ENCODE measurements at regions of chr1 and their contacts with region 1.

Region 1: DNA sequence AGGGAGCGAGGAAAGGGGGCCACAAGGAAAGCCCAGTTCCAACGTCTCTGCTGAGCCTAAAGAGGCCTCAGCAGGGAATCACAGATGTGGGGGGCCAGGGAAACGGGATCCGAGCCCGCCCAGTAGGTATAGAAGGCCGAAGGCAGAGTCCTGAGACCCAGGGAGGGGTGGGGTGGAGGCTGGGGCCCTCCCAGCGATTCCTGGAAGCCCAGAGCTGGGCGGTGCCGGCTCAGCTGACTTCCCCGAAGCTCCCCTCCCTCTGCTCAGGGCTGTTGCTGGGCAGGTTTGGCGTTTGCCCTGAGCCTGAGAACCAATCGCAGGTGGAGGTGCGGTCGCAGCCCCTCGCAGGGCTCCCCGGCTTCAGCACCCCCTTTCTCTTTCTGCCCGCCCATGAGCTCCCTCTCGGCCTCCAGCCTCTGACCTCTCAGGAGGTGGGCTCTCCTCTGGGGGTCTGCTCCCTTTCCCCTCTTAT is 12.8 kb downstream of the ADAMTSL4 start:
- DNase-seq: peak; percentile 73
- ATAC-seq: peak; percentile 66
- H3K4me3 ChIP-seq: peak overlapping the region; percentile 51 to 68
- H3K27ac ChIP-seq: peak overlapping the region; percentile 95
- H3K4me1 ChIP-seq: peaks cover 42 to 58% of the 10 kb centered on the region in 2 experiments
- H3K27me3 ChIP-seq: no peaks in the 10 kb centered on the region
- CTCF ChIP-seq: no peak
- POLR2A ChIP-seq: peak; percentile 2
- RAD21 ChIP-seq: no peak

Region 2: GRCh38 chr1:150464422-150464826 is 97.6 kb before region 1 on chr1:
- CTCF ChIA-PET with region 1: interaction called, 5 read pairs
- POLR2A ChIA-PET with region 1: no interaction called
- RAD21 ChIA-PET with region 1: no interaction called
- intact Hi-C with region 1: loop called (anchors 1 kb)
- DNase-seq: peak; percentile 41
- ATAC-seq: peak; percentile 81
- H3K4me3 ChIP-seq: no peak overlapping the region
- H3K27ac ChIP-seq: no peak overlapping the region
- H3K4me1 ChIP-seq: no peaks in the 10 kb centered on the region
- H3K27me3 ChIP-seq: no peaks in the 10 kb centered on the region
- CTCF ChIP-seq: peak; percentile 64 to 79 (median 67)
- POLR2A ChIP-seq: no peak
- RAD21 ChIP-seq: peak; percentile 83

Region 3: DNA sequence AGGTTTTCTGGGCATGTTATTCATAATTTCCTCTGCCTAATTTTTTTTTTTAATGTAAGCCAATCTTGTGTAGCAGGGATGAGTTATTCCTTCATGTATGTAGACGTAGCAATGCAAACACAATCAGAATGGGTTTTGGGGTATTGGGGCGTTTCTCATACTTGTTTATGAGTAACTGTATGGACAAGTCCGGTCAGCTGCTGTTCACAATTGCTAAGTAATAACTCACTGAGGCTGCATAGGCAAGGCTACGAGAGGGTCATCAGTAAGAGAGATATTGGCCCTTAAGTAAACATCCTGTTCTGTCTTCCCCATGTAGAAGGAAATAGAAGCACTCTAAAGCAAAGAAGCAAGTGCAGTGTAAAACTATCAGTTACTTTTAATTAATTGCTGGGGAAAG is 84.3 kb before region 1 on chr1:
- CTCF ChIA-PET with region 1: no interaction called
- POLR2A ChIA-PET with region 1: no interaction called
- RAD21 ChIA-PET with region 1: no interaction called
- intact Hi-C with region 1: no loop called
- DNase-seq: no peak
- ATAC-seq: no peak
- H3K4me3 ChIP-seq: no peak overlapping the region
- H3K27ac ChIP-seq: no peak overlapping the region
- H3K4me1 ChIP-seq: no peaks in the 10 kb centered on the region
- H3K27me3 ChIP-seq: 0 out of 2 replicates have a peak, but pooled peaks cover 2% of the 10 kb centered on the region
- CTCF ChIP-seq: no peak
- POLR2A ChIP-seq: no peak
- RAD21 ChIP-seq: no peak

Region 4: DNA sequence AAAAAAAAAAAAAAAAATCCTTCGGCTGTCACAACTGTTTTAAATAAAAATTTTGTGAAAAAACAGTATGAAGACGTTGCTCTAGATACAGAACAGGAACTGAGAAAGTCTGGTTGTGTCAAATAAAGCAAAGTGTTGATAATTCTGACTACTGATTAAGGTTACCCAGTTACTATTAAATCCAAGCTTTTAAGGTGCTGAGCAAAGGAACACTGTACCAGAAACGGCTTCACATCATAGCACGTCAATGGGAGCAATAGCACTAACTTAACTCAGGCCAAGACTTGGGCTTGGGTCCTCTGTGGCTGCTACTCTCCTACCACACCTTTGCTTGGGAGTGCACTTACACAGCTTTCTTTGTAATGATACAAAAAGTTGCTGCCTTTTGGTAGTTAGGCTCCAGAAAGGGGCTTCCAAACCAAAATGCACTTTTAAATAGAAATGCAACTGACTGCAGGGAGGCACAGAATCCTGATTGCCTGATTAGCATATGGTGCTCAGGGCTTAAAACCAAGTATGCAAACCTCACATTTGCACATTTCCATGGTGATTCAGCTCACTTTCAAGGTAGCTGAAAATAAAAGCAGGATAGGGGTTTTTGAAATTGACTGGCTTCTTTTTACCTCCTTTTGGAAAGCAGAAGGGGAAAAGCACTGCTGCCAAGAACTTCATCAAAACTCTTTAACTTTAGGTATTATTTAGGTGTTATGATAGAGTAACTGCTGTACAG is 11.1 kb after region 1 on chr1:
- CTCF ChIA-PET with region 1: interaction called, 9 read pairs
- POLR2A ChIA-PET with region 1: interaction called, 41 read pairs
- RAD21 ChIA-PET with region 1: no interaction called
- intact Hi-C with region 1: no loop called
- DNase-seq: no peak
- ATAC-seq: no peak
- H3K4me3 ChIP-seq: no peak overlapping the region
- H3K27ac ChIP-seq: no peak overlapping the region; the same call in 1 of the 2 replicates
- H3K4me1 ChIP-seq: peaks cover 56 to 84% of the 10 kb centered on the region in 2 experiments
- H3K27me3 ChIP-seq: no peaks in the 10 kb centered on the region
- CTCF ChIP-seq: no peak
- POLR2A ChIP-seq: no peak
- RAD21 ChIP-seq: no peak

Region 5: GRCh38 chr1:150629115-150629928 is 67.3 kb after region 1 on chr1 and contains the start of gene ENSA:
- CTCF ChIA-PET with region 1: interaction called, 13 read pairs
- POLR2A ChIA-PET with region 1: interaction called, 5 read pairs
- RAD21 ChIA-PET with region 1: no interaction called
- intact Hi-C with region 1: no loop called
- DNase-seq: peak; percentile 99
- ATAC-seq: peak; percentile 92
- H3K4me3 ChIP-seq: peak within 1 kb of the TSS; percentile 65 to 79
- H3K27ac ChIP-seq: peak within 1 kb of the TSS; percentile 73
- H3K4me1 ChIP-seq: peaks cover 9 to 29% of the 10 kb centered on the region in 2 experiments
- H3K27me3 ChIP-seq: no peaks in the 10 kb centered on the region
- CTCF ChIP-seq: no peak
- POLR2A ChIP-seq: peak; percentile 55
- RAD21 ChIP-seq: no peak
- total RNA-seq, gene ENSA: 130 TPM

Region 6: DNA sequence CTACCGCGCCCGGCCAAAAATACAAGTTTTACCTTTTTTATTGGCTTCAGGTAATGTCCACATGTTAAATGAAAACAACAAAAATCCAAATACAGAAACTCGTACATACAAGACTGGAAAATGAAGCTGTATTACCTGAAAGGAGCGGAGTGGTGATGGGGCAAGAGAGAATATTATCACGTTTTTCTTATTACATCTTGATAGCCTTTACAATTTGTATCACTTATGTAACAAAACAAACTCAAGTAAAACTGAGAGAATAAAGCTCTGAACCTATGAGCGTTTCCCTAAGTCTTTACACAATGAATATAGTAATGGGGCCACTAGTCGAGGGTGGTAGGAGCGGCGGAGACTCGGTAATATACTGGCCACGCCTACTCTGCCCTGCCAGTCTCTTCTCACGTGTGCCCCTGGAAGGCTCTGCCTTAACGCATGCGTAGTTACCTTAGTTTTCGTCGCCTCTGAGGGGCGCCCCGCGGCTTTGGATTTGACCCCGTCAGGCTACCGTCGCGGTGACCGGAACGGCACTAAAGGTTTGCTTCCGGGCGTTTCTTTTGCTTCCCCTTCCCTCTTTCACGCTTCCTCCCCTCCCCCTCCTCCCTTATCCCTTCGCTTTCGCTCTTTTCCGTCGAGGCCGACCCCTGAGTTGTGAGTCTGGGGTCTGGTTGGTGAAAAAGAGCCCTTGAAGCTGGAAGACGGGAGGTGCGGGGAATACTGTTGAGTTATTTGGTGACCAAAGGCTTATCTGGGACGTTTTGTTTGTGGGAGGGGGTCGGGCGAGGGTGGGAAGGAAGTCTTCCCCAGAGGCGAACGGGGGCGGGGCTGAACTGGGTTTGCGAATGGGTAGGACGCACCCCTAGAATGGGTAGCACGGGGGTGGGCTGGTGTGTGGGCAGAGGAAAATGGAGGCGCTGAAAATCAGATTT is 364.1 kb after region 1 on chr1 and contains the start of gene SETDB1:
- CTCF ChIA-PET with region 1: interaction called, 10 read pairs
- POLR2A ChIA-PET with region 1: no interaction called
- RAD21 ChIA-PET with region 1: no interaction called
- intact Hi-C with region 1: loop called (anchors 1 kb)
- DNase-seq: peak; percentile 95
- ATAC-seq: peak; percentile 93
- H3K4me3 ChIP-seq: peak within 1 kb of the TSS; percentile 74 to 77
- H3K27ac ChIP-seq: peak within 1 kb of the TSS; percentile 60
- H3K4me1 ChIP-seq: peaks cover 6 to 30% of the 10 kb centered on the region in 2 experiments
- H3K27me3 ChIP-seq: no peaks in the 10 kb centered on the region
- CTCF ChIP-seq: no peak
- POLR2A ChIP-seq: peak; percentile 56
- RAD21 ChIP-seq: no peak
- total RNA-seq, gene SETDB1: 54.3 TPM

Region 7: GRCh38 chr1:151008190-151008860 is 446.3 kb after region 1 on chr1 and contains the start of gene PRUNE1:
- CTCF ChIA-PET with region 1: no interaction called
- POLR2A ChIA-PET with region 1: no interaction called
- RAD21 ChIA-PET with region 1: no interaction called
- intact Hi-C with region 1: loop called (anchors 5 kb)
- DNase-seq: peak; percentile 94
- ATAC-seq: peak; percentile 92
- H3K4me3 ChIP-seq: peak within 1 kb of the TSS; percentile 60 to 94
- H3K27ac ChIP-seq: peak within 1 kb of the TSS; percentile 75
- H3K4me1 ChIP-seq: peaks cover 13 to 40% of the 10 kb centered on the region in 2 experiments; a peak in 3 of 4 replicates
- H3K27me3 ChIP-seq: no peaks in the 10 kb centered on the region
- CTCF ChIP-seq: no peak
- POLR2A ChIP-seq: peak; percentile 58
- RAD21 ChIP-seq: no peak
- total RNA-seq, gene PRUNE1: 20.2 TPM

Measured in HCT116 (cell line).